ENCODE measurements at regions of chr1 and their contacts with region 1.

Region 1: GRCh38 chr1:171226747-171227370 is 21.4 kb upstream of the FMO1 start:
- DNase-seq: peak; percentile 33
- H3K4me3 Mint-ChIP-seq: no peak overlapping the region
- H3K27ac Mint-ChIP-seq: no peak overlapping the region
- H3K4me1 Mint-ChIP-seq: no peaks in the 10 kb centered on the region
- H3K27me3 Mint-ChIP-seq: peaks cover 1% of the 10 kb centered on the region

Region 2: DNA sequence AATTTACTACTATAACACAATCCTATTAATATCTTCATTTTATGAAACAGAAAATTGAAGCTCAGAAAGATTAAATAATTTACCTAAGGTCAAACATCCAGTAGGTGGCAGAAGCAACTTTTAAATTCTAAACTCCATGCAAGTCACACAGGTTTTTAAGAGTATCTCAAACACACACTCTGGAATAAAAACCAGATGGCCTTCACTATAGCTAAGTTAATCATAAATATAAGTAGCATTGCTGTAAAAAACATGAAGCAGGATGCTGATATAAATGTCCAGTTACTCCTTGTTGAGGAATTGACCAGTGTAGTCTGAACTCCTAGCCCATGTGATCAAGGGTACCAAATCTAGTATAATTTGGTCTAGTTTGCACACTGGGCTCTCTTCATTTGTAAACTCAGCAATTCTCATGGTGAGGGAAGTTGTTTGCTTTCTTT is 145.5 kb before region 1 on chr1:
- CTCF ChIA-PET with region 1: interaction called, 4 read pairs
- POLR2A ChIA-PET with region 1: no interaction called
- intact Hi-C with region 1: loop called (anchors 5 kb)
- DNase-seq: no peak
- H3K4me3 Mint-ChIP-seq: no peak overlapping the region
- H3K27ac Mint-ChIP-seq: no peak overlapping the region
- H3K4me1 Mint-ChIP-seq: no peaks in the 10 kb centered on the region
- H3K27me3 Mint-ChIP-seq: peaks cover 12% of the 10 kb centered on the region

Region 3: DNA sequence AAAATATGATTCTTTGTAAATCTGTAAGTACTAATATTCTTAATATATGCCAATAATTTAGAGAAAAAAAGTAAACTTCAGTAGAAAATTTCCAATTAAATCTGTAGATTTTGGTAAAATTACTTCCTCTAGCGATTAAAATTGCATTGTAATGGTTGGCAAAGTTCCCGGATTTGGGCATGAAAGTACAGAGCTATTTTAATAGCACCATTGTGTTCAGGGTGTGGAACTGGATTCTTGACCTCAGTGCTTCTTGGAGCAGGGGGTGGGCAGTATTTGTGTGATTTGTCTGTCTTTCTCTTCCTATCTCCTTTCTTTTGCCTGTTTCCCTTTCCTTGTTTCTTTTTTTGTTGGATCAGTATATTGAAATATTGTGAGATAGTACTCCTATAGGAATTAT is 686.5 kb after region 1 on chr1:
- CTCF ChIA-PET with region 1: no interaction called
- POLR2A ChIA-PET with region 1: no interaction called
- intact Hi-C with region 1: no loop called
- DNase-seq: no peak
- H3K4me3 Mint-ChIP-seq: no peak overlapping the region
- H3K27ac Mint-ChIP-seq: no peak overlapping the region
- H3K4me1 Mint-ChIP-seq: no peaks in the 10 kb centered on the region
- H3K27me3 Mint-ChIP-seq: no peaks in the 10 kb centered on the region

Measured in activated CD4-positive, alpha-beta memory T cell treated with anti-CD3 and anti-CD28 coated beads for 36 hours (primary cell).